Left lung (tissue), 14 donors: ENCODE measurements at regions of chr9 and their contacts with region 1.

Region 1: GRCh38 chr9:132235946-132236661 is 74.2 kb downstream of the NTNG2 start:
- DNase-seq: peak; percentile 64 to 93 (median 78)
- ATAC-seq: peak; percentile 39
- H3K4me3 ChIP-seq: no peak overlapping the region
- H3K27ac ChIP-seq: no peak overlapping the region
- H3K4me1 ChIP-seq: peaks cover 0 to 33% of the 10 kb centered on the region in 2 donors
- H3K27me3 ChIP-seq: peaks cover 0 to 33% of the 10 kb centered on the region in 2 donors
- CTCF ChIP-seq: peak; percentile 94

Region 2: DNA sequence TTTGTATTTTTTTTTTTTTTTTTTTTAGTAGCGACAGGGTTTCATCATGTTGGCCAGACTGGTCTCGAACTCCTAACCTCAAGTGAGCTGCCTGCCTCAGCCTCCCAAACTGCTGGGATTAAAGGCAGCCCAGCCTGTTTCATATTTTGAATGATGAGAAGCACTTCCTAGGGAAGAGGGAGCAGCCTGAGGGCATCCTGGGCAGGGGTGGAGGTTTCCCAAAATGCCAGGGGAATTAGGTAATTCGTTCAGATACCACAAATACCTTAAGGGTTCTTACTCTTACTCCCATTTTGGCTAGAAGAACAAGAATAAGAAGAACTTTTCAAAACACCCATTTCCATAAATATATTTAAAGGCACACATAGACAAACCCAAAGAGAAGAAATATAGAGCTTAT is 466.7 kb before region 1 on chr9:
- intact Hi-C with region 1: loop called in 1 of 2 experiments (anchors 5 kb)
- DNase-seq: no peak
- ATAC-seq: no peak
- H3K4me3 ChIP-seq: no peak overlapping the region
- H3K27ac ChIP-seq: no peak overlapping the region
- H3K4me1 ChIP-seq: no peaks in the 10 kb centered on the region
- H3K27me3 ChIP-seq: peaks cover 0 to 51% of the 10 kb centered on the region in 2 donors
- CTCF ChIP-seq: no peak

Region 3: DNA sequence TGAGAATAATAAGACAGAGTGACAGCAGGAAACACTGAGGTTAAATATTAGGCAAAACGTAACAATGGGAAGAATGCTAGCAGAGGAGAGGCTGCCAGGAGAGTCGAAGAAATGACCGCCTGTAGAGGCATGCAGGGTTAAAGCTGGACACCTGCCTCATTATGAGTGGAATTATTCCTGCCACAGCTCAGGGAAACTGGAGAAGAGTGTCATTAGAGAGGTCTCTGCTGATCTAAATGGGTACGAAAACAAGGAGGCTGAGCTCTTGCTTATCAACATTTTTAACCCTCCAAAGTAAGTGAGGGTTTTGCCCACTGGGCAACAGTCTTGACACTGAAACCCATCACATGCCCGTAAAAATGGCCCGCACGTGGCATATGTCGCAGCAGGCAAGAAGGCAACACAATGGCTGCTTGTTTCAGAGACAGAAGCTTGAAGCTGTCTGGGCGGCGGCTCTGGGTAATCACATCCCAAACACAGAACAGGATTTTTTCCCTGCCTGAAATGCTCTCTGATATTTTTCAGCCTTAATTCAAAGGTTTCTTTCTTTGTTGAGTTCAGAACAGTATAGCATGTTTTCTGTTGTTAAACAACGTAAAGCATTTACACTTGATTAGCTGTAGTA is 275.1 kb before region 1 on chr9:
- intact Hi-C with region 1: no loop called
- DNase-seq: no peak
- ATAC-seq: no peak
- H3K4me3 ChIP-seq: no peak overlapping the region
- H3K27ac ChIP-seq: no peak overlapping the region
- H3K4me1 ChIP-seq: no peaks in the 10 kb centered on the region
- H3K27me3 ChIP-seq: no peaks in the 10 kb centered on the region
- CTCF ChIP-seq: no peak

Region 4: GRCh38 chr9:132169672-132170392 is 66.3 kb before region 1 on chr9:
- intact Hi-C with region 1: loop called in 1 of 2 experiments (anchors 10 kb)
- DNase-seq: peak in 3 of 4 donors; percentile 44 to 93 (median 56)
- ATAC-seq: peak; percentile 87
- H3K4me3 ChIP-seq: no peak overlapping the region
- H3K27ac ChIP-seq: no peak overlapping the region
- H3K4me1 ChIP-seq: peaks cover 0 to 3% of the 10 kb centered on the region in 2 donors
- H3K27me3 ChIP-seq: peaks cover 22 to 64% of the 10 kb centered on the region in 2 donors
- CTCF ChIP-seq: peak; percentile 79 to 95

Region 5: DNA sequence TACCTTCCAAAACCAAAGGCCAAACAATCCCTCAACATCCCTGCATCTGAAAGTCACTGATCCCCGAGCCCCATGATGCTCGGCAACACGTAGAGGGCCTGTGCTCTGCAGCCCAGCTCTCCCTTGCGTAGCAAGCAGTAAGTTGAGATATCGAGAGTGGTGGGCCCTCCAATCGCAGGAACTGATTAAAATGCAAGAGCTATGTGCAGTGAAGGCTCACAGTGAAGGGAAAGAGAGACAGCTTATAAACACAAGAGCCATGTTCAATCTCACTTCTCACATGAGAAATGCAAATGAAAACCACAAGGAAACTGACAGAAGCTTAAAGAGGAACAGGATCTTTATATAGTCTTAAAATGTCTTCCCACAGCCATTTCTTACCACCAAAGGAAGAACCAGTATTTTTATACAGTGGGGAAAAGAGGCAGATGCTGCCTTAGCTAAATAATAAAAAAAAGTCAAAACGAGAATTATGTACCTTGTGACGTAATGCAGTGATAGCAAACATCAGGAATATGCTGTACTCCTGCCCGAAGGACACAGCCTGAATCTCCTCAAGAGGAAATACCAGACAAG is 145.9 kb after region 1 on chr9:
- intact Hi-C with region 1: no loop called
- DNase-seq: no peak
- ATAC-seq: peak; percentile 24
- H3K4me3 ChIP-seq: no peak overlapping the region
- H3K27ac ChIP-seq: peak overlapping the region; percentile 13 to 61
- H3K4me1 ChIP-seq: peaks cover 0 to 21% of the 10 kb centered on the region in 2 donors
- H3K27me3 ChIP-seq: no peaks in the 10 kb centered on the region
- CTCF ChIP-seq: no peak